CD4-positive, alpha-beta memory T cell (primary cell): ENCODE measurements at regions of chr2 and their contacts with region 1.

Region 1: GRCh38 chr2:191748059-191748461 is 70.1 kb downstream of the NABP1 start:
- DNase-seq: no peak
- H3K4me3 ChIP-seq: no peak overlapping the region
- H3K4me3 Mint-ChIP-seq: no peak overlapping the region
- H3K27ac ChIP-seq: no peak overlapping the region
- H3K27ac Mint-ChIP-seq: no peak overlapping the region
- H3K4me1 ChIP-seq: no peaks in the 10 kb centered on the region
- H3K4me1 Mint-ChIP-seq: no peaks in the 10 kb centered on the region
- H3K27me3 ChIP-seq: no peaks in the 10 kb centered on the region
- H3K27me3 Mint-ChIP-seq: peaks cover 7 to 13% of the 10 kb centered on the region in 2 donors

Region 2: GRCh38 chr2:191728750-191729624 is 19.1 kb before region 1 on chr2:
- CTCF ChIA-PET with region 1: no interaction called
- POLR2A ChIA-PET with region 1: no interaction called
- intact Hi-C with region 1: no loop called
- DNase-seq: no peak
- H3K4me3 ChIP-seq: no peak overlapping the region
- H3K4me3 Mint-ChIP-seq: no peak overlapping the region
- H3K27ac ChIP-seq: no peak overlapping the region
- H3K27ac Mint-ChIP-seq: no peak overlapping the region
- H3K4me1 ChIP-seq: no peaks in the 10 kb centered on the region
- H3K4me1 Mint-ChIP-seq: no peaks in the 10 kb centered on the region
- H3K27me3 ChIP-seq: no peaks in the 10 kb centered on the region
- H3K27me3 Mint-ChIP-seq: no peaks in the 10 kb centered on the region

Region 3: DNA sequence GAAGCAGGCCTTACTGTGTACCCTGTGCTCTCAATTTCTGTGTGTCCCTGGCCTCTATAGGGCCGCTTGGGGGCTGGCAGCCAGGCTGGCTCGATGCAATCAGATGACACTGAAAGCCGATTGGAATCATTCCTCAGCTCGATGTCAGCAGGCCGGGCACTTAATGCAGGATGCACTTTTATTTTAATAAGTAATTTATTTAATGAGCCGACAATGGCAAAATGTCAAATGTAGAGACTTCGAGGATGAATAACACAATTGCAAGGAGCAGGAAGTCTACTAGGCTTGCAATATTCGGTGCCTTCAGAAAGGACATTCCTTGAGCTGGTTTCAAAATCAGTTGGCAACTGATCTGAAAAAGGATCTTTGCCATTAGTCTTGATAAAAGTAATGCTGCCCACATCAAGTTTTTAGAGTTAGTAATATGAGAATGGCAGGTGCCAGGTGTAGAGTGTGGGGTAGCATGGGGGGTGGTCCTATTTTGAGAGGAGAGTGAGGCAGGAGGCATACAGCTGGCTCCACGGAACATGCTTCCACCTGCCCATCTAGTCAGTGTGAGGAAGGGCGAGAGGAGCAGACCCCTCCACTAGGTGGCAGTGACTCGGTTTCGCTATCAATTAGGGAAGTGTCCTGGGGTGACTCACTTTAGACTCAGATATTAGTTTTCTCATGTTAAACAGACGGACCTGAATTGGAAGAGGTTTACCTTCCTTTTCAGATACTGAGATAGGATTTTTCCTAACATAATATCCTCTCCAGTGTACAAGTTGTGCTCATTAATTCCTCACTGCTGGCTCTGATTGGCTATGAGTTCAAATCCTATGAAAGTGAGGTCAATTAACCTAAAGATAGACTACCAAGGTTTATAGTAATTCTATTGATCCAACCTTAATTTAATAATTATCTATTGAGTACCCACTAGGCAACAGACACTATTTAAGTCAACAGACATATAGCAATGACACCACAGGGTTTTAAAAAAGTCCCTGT is 10.8 kb after region 1 on chr2:
- CTCF ChIA-PET with region 1: interaction called, 16 read pairs
- POLR2A ChIA-PET with region 1: no interaction called
- intact Hi-C with region 1: no loop called
- DNase-seq: peak; percentile 23 to 57 (median 35)
- H3K4me3 ChIP-seq: no peak overlapping the region
- H3K4me3 Mint-ChIP-seq: peak overlapping the region in 3 of 8 donors; percentile 12 to 32 (median 18)
- H3K27ac ChIP-seq: no peak overlapping the region
- H3K27ac Mint-ChIP-seq: no peak overlapping the region
- H3K4me1 ChIP-seq: peaks cover 11% of the 10 kb centered on the region
- H3K4me1 Mint-ChIP-seq: peaks cover 4 to 6% (median 5%) of the 10 kb centered on the region in 4 donors
- H3K27me3 ChIP-seq: peaks cover 3% of the 10 kb centered on the region
- H3K27me3 Mint-ChIP-seq: peaks cover 8 to 13% of the 10 kb centered on the region in 2 donors

Region 4: DNA sequence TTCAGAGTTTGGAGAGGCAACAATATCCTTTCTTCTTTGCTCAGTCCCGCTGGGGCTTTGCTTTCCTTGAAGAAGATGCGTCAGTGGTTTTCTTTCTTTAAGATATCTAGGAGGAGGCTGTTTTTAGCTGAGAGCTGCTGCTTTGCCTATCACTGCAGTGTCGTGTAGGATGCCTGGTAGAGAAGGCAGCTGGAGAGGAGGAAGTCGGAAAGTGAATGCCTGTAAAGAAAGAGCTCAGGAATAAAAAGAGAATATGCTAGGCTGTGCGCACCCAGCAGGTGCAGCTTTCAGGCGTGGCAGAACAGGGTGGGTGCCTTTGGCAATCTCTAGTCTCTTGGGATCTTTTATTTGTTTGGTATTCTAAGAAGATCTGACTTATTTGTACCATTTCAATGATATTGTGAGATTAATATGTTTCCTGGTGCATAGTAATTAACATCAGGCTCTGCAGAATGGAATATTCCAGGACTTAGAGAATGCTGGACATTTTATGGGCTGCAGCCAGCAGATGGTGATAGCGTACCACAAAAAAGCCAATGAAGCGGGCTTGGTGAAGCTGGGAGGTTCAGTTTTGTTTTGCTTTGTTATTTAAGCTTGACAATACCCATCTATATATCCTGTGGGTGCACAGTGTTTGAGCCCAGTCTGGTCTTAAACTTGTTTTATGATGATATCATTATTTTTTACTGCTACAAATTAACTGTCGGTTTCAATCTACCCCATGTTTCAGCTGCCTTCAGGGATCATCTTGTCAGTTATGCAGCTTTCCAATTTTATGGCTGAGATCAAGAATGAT is 63.9 kb after region 1 on chr2:
- CTCF ChIA-PET with region 1: no interaction called
- POLR2A ChIA-PET with region 1: no interaction called
- intact Hi-C with region 1: no loop called
- DNase-seq: peak in 4 of 5 donors; percentile 5 to 16 (median 10)
- H3K4me3 ChIP-seq: no peak overlapping the region
- H3K4me3 Mint-ChIP-seq: no peak overlapping the region
- H3K27ac ChIP-seq: no peak overlapping the region
- H3K27ac Mint-ChIP-seq: no peak overlapping the region
- H3K4me1 ChIP-seq: no peaks in the 10 kb centered on the region
- H3K4me1 Mint-ChIP-seq: peaks cover 0 to 1% (median 0%) of the 10 kb centered on the region in 4 donors
- H3K27me3 ChIP-seq: no peaks in the 10 kb centered on the region
- H3K27me3 Mint-ChIP-seq: peaks cover 8 to 13% of the 10 kb centered on the region in 2 donors

Region 5: DNA sequence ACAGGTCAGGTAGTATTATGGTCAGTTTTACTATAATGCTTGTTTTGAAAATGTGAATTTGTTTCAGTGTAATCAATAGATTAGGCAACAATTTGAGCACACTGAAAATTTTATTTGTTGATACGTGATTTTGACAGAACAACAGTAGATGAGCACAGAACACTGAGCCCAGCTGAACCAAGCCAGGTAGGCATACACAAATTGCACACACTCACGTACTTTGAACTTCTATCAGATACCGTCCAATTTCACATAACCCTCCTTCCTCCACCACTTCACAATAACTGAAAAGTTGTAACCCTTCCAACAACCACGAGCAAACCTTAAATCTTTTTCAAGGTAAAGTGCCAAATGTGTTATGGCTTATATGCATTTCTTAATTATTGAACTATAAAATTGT is 676.2 kb after region 1 on chr2:
- CTCF ChIA-PET with region 1: no interaction called
- POLR2A ChIA-PET with region 1: no interaction called
- intact Hi-C with region 1: no loop called
- DNase-seq: no peak
- H3K4me3 ChIP-seq: no peak overlapping the region
- H3K4me3 Mint-ChIP-seq: no peak overlapping the region
- H3K27ac ChIP-seq: no peak overlapping the region
- H3K27ac Mint-ChIP-seq: no peak overlapping the region
- H3K4me1 ChIP-seq: no peaks in the 10 kb centered on the region
- H3K4me1 Mint-ChIP-seq: no peaks in the 10 kb centered on the region
- H3K27me3 ChIP-seq: no peaks in the 10 kb centered on the region
- H3K27me3 Mint-ChIP-seq: no peaks in the 10 kb centered on the region